Dendritic cell treated with granulocyte-macrophage colony-stimulating factor and Interleukin-4, amounts not matched to agents 40 ng/mL and 50 ng/mL, for 4 days (primary cell): ENCODE measurements at regions of chr3 and their contacts with region 1.

Region 1: DNA sequence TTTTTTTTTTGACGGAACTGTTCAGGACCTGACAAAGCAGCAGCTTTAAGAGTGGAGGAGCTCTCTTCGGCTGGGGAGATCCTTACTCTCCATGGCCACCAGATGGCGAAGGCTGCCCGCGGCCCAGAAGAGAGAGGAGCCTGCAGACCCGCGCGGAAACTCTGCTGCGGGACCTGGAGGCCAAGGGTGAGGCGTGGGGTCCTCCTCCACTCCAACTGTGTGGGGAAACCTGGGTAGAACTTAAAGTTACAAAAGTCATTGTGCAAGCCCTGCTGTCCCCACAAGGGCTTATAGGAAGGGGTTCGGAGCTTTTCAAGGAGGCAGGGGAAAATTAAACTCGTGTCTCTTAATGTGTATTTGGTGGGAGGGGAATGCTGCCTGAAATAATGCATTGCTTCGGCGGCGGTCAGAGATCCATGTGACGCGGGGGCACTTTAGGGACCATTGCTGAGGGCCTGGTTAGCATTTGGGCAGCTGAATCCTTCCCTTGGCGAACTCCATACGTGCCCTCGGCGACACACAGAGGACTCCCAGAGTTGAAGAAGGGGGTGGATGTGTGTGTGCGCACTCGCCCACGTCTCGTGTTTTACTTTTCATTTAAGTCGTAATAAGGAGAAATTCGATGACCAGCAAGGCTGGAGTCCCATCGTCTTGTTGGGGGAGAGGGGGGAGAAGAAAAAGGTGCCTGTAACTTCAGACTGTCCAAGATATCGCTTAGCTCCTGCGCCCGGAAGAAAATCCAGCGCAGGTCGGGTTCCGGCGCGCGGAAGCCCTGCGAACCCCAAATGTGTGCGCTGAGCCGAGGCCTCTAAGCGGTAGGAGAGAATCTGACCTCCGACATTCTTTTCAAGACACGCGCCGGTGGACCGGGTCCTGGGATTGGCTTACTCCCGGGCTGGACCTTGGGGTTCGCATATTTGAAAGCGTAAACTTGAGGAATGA is 9.7 kb downstream of the EOMES start:
- H3K4me3 Mint-ChIP-seq: peak overlapping the region; percentile 90
- H3K27ac Mint-ChIP-seq: peak overlapping the region; percentile 16
- H3K4me1 Mint-ChIP-seq: peaks cover 35% of the 10 kb centered on the region
- H3K27me3 Mint-ChIP-seq: peaks cover 75% of the 10 kb centered on the region

Region 2: GRCh38 chr3:27507515-27508202 is 204.7 kb before region 1 on chr3:
- intact Hi-C with region 1: no loop called
- H3K4me3 Mint-ChIP-seq: no peak overlapping the region
- H3K27ac Mint-ChIP-seq: no peak overlapping the region
- H3K4me1 Mint-ChIP-seq: peaks cover 21% of the 10 kb centered on the region
- H3K27me3 Mint-ChIP-seq: no peaks in the 10 kb centered on the region

Region 3: DNA sequence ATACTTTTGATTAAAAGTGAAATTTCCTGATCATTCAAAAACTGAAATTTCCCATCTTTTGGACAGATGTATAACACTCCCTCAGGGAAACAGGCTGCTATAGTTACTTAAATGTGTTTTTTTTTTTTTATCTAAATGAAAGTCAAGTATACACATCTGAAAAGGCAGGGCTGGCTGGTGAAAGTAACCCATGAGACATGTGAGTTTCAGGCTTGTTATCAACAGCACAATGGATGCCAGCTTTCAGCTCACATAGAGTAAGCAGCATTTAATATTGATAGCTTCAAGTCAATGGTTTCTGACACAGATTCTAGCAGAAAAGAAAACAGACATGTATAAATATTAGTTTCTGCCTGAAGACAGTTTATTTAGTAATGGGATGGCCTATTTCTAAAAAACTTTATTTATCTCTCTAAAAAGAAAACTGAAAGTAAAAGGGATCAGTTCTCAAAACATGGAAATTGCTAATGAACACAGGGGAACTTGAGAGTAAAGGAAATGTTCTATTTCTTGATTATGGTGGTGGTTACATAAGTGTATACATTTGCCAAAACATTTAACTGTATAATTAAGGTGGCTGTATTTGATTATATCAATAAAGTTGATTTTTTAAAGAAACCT is 439.3 kb after region 1 on chr3:
- intact Hi-C with region 1: loop called (anchors 10 kb)
- H3K4me3 Mint-ChIP-seq: no peak overlapping the region
- H3K27ac Mint-ChIP-seq: no peak overlapping the region
- H3K4me1 Mint-ChIP-seq: no peaks in the 10 kb centered on the region
- H3K27me3 Mint-ChIP-seq: no peaks in the 10 kb centered on the region

Region 4: GRCh38 chr3:28286595-28286994 is 574.2 kb after region 1 on chr3:
- intact Hi-C with region 1: loop called (anchors 2 kb)
- H3K4me3 Mint-ChIP-seq: no peak overlapping the region
- H3K27ac Mint-ChIP-seq: no peak overlapping the region
- H3K4me1 Mint-ChIP-seq: peaks cover 8% of the 10 kb centered on the region
- H3K27me3 Mint-ChIP-seq: no peaks in the 10 kb centered on the region

Region 5: GRCh38 chr3:28328188-28329151 is 616.1 kb after region 1 on chr3:
- intact Hi-C with region 1: loop called (anchors 1 kb)
- H3K4me3 Mint-ChIP-seq: no peak overlapping the region
- H3K27ac Mint-ChIP-seq: no peak overlapping the region
- H3K4me1 Mint-ChIP-seq: no peaks in the 10 kb centered on the region
- H3K27me3 Mint-ChIP-seq: no peaks in the 10 kb centered on the region